ENCODE measurements at regions of chr1 and their contacts with region 1.

Region 1: DNA sequence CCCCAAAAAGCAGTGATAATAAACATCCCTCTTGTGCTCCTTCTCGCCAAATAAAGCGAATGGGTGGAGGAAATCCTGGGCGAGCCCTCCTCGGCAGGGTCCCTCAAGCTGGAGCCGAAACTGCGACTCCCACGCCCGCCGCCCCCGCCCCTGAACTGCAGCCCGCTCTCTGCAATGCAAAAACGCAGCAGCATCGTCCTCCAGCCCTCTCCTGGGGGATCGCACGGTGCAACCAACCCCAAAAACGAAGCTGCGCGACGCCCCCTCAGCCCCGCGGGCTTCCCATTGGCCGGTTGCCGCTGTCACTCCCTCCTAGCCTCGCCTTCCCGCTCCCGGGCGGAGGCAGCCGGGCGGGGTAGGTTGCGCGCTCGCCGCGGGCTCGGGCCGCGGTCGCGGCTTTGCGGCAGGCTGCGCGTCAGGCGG is at the start of gene TMCC2:
- DNase-seq: peak; percentile 92
- ATAC-seq: peak; percentile 82
- H3K4me3 ChIP-seq: peak within 1 kb of the TSS; percentile 81
- H3K27ac ChIP-seq: no peak within 1 kb of the TSS
- H3K4me1 ChIP-seq: peaks cover 19% of the 10 kb centered on the region
- H3K27me3 ChIP-seq: no peaks in the 10 kb centered on the region
- CTCF ChIP-seq: no peak
- total RNA-seq, gene TMCC2: 8.7 and 11.3 TPM in 2 replicates

Region 2: GRCh38 chr1:205121660-205122488 is 105.7 kb before region 1 on chr1 and contains the start of gene RBBP5:
- CTCF ChIA-PET with region 1: interaction called, 3 read pairs
- POLR2A ChIA-PET with region 1: no interaction called
- intact Hi-C with region 1: loop called (anchors 1 kb)
- DNase-seq: peak; percentile 99
- ATAC-seq: peak; percentile 98
- H3K4me3 ChIP-seq: peak within 1 kb of the TSS; percentile 73
- H3K27ac ChIP-seq: peak within 1 kb of the TSS; percentile 72
- H3K4me1 ChIP-seq: peaks cover 24% of the 10 kb centered on the region
- H3K27me3 ChIP-seq: no peaks in the 10 kb centered on the region
- CTCF ChIP-seq: peak; percentile 98
- total RNA-seq, gene RBBP5: 39.5 and 41.7 TPM in 2 replicates

Region 3: DNA sequence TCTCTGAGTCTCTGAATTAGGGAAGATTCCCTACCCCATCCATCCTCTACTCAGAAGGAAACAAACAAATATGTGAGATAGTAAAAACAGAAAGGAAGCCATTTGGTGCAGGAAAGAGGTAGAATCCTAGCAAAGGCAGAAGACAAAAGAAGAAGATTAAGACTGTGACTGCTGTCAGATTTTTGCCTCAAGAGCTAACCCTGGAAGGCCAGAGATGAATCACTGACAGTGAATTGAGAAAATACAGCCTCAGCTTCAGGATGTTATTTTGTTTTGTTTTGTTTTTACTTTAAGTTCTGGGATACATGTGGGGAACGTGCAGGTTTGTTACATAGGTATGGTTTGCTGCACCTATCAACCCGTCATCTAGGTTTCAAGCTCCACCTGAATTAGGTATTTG is 47.8 kb before region 1 on chr1:
- CTCF ChIA-PET with region 1: no interaction called
- POLR2A ChIA-PET with region 1: no interaction called
- intact Hi-C with region 1: loop called (anchors 5 kb)
- DNase-seq: no peak
- ATAC-seq: no peak
- H3K4me3 ChIP-seq: no peak overlapping the region
- H3K27ac ChIP-seq: no peak overlapping the region
- H3K4me1 ChIP-seq: peaks cover 18% of the 10 kb centered on the region
- H3K27me3 ChIP-seq: no peaks in the 10 kb centered on the region
- CTCF ChIP-seq: no peak

Region 4: GRCh38 chr1:205199090-205199930 is 28.3 kb before region 1 on chr1:
- CTCF ChIA-PET with region 1: interaction called, 20 read pairs
- POLR2A ChIA-PET with region 1: interaction called, 6 read pairs
- intact Hi-C with region 1: no loop called
- DNase-seq: peak; percentile 33
- ATAC-seq: peak; percentile 64
- H3K4me3 ChIP-seq: no peak overlapping the region
- H3K27ac ChIP-seq: no peak overlapping the region
- H3K4me1 ChIP-seq: peaks cover 10% of the 10 kb centered on the region; the same call in 1 of the 2 replicates
- H3K27me3 ChIP-seq: no peaks in the 10 kb centered on the region
- CTCF ChIP-seq: no peak

Region 5: GRCh38 chr1:205211169-205211838 is 16.3 kb before region 1 on chr1 and contains the start of gene DSTYK:
- CTCF ChIA-PET with region 1: no interaction called
- POLR2A ChIA-PET with region 1: no interaction called
- intact Hi-C with region 1: loop called (anchors 2 kb)
- DNase-seq: peak; percentile 97
- ATAC-seq: peak; percentile 90
- H3K4me3 ChIP-seq: peak within 1 kb of the TSS; percentile 89
- H3K27ac ChIP-seq: peak within 1 kb of the TSS; percentile 71
- H3K4me1 ChIP-seq: peaks cover 10% of the 10 kb centered on the region; the same call in 1 of the 2 replicates
- H3K27me3 ChIP-seq: no peaks in the 10 kb centered on the region
- CTCF ChIP-seq: no peak
- total RNA-seq, gene DSTYK: 8.4 and 9.3 TPM in 2 replicates

Region 6: GRCh38 chr1:205273551-205273982 is 46.0 kb after region 1 on chr1:
- CTCF ChIA-PET with region 1: interaction called, 12 read pairs
- POLR2A ChIA-PET with region 1: no interaction called
- intact Hi-C with region 1: no loop called
- DNase-seq: peak; percentile 93
- ATAC-seq: peak; percentile 70
- H3K4me3 ChIP-seq: no peak overlapping the region
- H3K27ac ChIP-seq: no peak overlapping the region
- H3K4me1 ChIP-seq: peaks cover 16% of the 10 kb centered on the region
- H3K27me3 ChIP-seq: no peaks in the 10 kb centered on the region
- CTCF ChIP-seq: peak; percentile 99

Region 7: DNA sequence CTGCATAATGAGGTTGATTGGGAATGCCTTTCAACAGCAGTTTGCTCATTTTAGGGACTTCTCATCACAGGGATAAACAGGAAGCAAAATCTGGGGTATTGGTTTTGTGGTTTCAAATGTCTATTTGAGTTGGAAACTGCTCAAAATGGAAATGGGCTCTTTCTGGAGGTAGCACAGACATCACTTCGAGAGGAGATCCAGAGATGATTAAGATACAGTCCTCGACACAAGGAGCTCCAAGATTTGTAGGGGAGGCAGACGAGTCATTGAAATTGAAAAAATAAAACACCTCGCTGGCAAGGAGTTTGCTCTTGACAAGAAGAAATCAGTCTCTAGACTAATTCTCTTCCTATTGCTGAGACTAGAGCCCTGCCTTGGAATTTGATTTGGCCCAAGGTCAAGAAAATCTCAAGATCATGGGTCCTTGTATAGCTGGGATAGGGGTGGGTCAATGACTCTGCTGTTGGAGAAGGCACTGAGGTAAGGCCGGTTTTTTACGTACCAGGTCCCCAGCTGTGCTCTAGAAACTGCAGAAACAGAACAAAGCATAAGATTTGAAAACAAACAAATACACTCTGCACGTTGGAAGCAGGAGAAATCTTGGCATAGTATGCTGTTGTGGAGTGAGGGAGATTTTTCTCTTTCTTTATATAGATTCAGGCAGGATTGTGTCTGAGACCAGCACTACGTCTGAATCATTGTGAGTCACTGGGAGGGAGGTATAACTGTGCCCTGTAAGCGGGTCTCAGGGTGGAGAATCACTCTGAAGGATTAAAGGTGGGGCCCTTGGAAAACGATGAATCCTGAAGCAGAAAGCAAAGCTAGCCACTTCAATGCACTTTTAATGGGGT is 146.9 kb after region 1 on chr1:
- CTCF ChIA-PET with region 1: no interaction called
- POLR2A ChIA-PET with region 1: no interaction called
- intact Hi-C with region 1: no loop called
- DNase-seq: peak; percentile 91
- ATAC-seq: peak; percentile 90
- H3K4me3 ChIP-seq: peak overlapping the region; percentile 54
- H3K27ac ChIP-seq: peak overlapping the region; percentile 85
- H3K4me1 ChIP-seq: peaks cover 40% of the 10 kb centered on the region
- H3K27me3 ChIP-seq: peaks cover 4% of the 10 kb centered on the region; the same call in 1 of the 2 replicates
- CTCF ChIP-seq: no peak

Measured in PC-3 (cell line).